PC-9 (cell line): ENCODE measurements at regions of chr16 and their contacts with region 1.

Region 1: GRCh38 chr16:4580245-4580644 is 24.1 kb downstream of the C16orf96 start:
- DNase-seq: peak in 1 of 2 experiments; percentile 60
- H3K4me3 ChIP-seq: no peak overlapping the region
- H3K27ac ChIP-seq: no peak overlapping the region
- H3K4me1 ChIP-seq: no peaks in the 10 kb centered on the region
- H3K27me3 ChIP-seq: no peaks in the 10 kb centered on the region
- CTCF ChIP-seq: no peak

Region 2: GRCh38 chr16:4506450-4506849 is 73.8 kb before region 1 on chr16:
- CTCF ChIA-PET with region 1: no interaction called
- POLR2A ChIA-PET with region 1: no interaction called
- intact Hi-C with region 1: loop called (anchors 1 kb)
- DNase-seq: peak; percentile 50 to 57
- H3K4me3 ChIP-seq: no peak overlapping the region
- H3K27ac ChIP-seq: no peak overlapping the region
- H3K4me1 ChIP-seq: 0 out of 2 replicates have a peak, but pooled peaks cover 1% of the 10 kb centered on the region
- H3K27me3 ChIP-seq: no peaks in the 10 kb centered on the region
- CTCF ChIP-seq: peak; percentile 87

Region 3: GRCh38 chr16:4511441-4512082 is 68.7 kb before region 1 on chr16:
- CTCF ChIA-PET with region 1: no interaction called
- POLR2A ChIA-PET with region 1: no interaction called
- intact Hi-C with region 1: loop called (anchors 1 kb)
- DNase-seq: peak; percentile 64 to 74
- H3K4me3 ChIP-seq: no peak overlapping the region
- H3K27ac ChIP-seq: no peak overlapping the region
- H3K4me1 ChIP-seq: no peaks in the 10 kb centered on the region
- H3K27me3 ChIP-seq: no peaks in the 10 kb centered on the region
- CTCF ChIP-seq: peak; percentile 70

Region 4: DNA sequence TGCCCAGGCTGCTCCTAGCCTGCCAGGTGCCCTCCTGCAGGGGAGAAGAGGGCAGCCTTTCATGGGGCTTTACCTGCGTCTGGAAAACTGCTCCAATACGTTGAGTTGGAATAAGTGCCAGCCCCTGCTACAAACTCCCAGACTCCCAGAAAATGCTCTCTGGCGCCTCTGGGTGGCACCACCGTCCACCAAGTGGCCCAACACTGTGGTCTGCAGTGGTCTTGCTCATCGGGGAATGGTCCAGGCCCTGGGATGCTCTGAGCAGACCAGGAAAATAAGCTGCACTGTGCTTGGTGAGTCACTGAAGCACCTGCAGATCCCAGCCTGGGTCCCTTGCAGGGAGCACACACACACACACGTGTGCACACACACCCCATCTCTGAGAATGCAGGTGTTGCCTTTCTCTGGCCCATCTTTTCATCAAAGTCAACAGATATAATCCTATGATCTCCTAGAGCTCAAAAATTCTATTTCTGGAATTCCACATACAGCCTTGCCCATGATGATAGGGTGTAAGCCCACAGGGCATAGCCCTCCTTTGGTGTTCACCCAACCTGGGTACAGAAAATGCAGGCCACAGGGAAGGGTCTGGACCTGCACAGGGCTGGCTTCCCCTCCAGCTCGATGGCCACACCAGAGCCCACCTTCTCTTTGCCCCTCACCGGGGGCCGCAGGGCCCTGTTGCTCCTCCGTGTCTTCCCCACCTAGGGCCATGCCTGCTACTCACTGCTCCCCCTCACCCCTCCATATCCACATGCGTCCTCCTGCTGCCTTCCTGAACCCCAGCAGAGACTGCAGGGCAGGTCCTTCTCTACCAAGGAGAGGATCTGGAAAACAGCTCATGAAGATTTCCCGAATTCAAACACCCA is 62.2 kb before region 1 on chr16:
- CTCF ChIA-PET with region 1: no interaction called
- POLR2A ChIA-PET with region 1: no interaction called
- intact Hi-C with region 1: loop called (anchors 1 kb)
- DNase-seq: peak in 1 of 2 experiments; percentile 45
- H3K4me3 ChIP-seq: no peak overlapping the region
- H3K27ac ChIP-seq: no peak overlapping the region
- H3K4me1 ChIP-seq: no peaks in the 10 kb centered on the region
- H3K27me3 ChIP-seq: no peaks in the 10 kb centered on the region
- CTCF ChIP-seq: peak; percentile 74